Thyroid gland (tissue), 4 donors: ENCODE measurements at regions of chr16 and their contacts with region 1.

Region 1: DNA sequence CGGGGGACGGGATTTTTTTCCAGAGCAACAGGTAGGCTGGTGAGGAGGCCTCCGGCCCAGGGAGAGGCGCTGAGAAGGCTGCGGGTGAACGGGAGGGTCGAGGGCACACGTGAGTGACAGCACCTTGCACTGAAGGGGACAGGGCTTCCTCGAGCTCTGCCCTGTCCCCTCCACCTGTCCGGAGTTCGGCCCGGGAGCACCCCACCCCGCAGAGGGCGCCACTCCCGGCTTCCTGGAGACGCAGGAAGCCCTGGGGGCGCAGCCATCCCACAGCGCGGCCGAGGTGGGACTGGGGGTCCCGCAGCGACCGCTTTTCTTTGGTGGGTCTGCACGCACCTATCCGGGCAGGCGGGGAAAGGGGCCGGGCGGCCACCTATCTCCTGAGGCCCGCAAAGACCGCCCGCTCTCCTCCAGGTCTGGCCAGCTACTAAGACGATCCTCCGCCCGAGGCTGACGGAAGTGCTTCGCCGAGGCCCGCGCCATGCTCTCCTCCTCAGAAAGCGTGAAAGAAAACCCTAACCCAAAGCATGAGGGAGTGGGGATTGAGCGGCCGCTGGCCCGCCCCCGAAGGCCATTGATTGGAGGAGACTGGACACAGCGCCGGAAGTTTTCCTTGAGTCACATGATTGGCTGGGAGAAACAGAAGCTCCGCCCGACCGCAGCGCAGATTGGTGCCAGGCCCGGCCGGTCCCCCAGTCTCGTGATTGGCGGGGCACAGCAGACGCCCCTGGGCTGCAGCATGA is 34.3 kb downstream of the DDX19A start:
- DNase-seq: peak; percentile 98
- H3K4me3 ChIP-seq: peak overlapping the region; percentile 63 to 69 (median 63)
- H3K27ac ChIP-seq: peak overlapping the region; percentile 13 to 80 (median 75)
- H3K4me1 ChIP-seq: peaks cover 8 to 10% of the 10 kb centered on the region in 2 donors
- H3K27me3 ChIP-seq: no peaks in the 10 kb centered on the region
- CTCF ChIP-seq: peak in 4 of 6 experiments; percentile 15 to 26 (median 20)
- POLR2A ChIP-seq: peak in 1 of 2 donors; percentile 82

Region 2: DNA sequence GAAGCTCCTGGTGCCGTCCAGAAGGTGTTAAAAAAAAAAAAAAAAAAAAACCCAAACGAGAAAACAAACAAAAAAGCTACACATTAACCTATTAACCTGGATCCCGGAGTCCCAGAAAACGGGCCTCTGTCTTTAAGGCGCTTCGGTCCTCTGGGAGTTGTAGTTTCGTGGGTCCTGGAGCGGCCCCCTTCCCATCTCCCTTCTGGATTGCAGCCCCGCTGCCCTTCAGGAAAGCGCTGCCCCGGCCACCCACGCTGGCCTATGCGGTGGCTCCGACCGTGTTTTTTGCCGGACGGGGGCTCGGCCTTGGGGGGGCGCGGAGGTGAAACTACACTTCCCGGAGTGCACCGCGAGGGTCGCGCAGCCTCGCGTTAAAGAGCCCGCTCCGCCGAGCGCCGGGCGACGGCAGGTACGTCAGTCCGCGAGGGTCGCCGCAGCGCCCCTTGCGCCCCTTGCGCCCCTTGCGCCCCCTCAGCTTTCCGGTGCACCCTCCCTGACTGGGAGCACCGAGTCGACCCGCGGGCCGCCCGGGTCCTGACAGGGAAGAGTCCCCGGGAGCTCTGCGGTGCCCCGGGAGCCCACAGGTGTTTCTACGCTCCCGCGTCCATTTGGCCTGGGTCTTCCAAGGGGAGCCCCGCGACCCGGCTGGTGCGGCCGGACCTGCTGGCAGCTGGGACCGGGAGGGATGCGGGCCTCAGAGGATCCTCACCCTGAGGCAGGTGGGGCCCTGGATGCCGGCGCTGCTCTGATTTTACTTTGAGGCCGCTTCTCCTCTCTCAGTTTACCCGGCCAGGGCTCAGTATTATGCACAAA is 73.4 kb after region 1 on chr16 and contains the start of gene FCSK:
- intact Hi-C with region 1: loop called (anchors 5 kb)
- DNase-seq: peak; percentile 70
- H3K4me3 ChIP-seq: peak within 1 kb of the TSS; percentile 74 to 94 (median 81)
- H3K27ac ChIP-seq: peak within 1 kb of the TSS; percentile 67 to 100 (median 96)
- H3K4me1 ChIP-seq: peaks cover 0 to 8% of the 10 kb centered on the region in 2 donors
- H3K27me3 ChIP-seq: no peaks in the 10 kb centered on the region
- CTCF ChIP-seq: peak in 1 of 6 experiments; percentile 19
- POLR2A ChIP-seq: peak in 1 of 2 donors; percentile 59
- total RNA-seq, gene FCSK: 20.3 to 40.2 (median 24.5) TPM

Region 3: DNA sequence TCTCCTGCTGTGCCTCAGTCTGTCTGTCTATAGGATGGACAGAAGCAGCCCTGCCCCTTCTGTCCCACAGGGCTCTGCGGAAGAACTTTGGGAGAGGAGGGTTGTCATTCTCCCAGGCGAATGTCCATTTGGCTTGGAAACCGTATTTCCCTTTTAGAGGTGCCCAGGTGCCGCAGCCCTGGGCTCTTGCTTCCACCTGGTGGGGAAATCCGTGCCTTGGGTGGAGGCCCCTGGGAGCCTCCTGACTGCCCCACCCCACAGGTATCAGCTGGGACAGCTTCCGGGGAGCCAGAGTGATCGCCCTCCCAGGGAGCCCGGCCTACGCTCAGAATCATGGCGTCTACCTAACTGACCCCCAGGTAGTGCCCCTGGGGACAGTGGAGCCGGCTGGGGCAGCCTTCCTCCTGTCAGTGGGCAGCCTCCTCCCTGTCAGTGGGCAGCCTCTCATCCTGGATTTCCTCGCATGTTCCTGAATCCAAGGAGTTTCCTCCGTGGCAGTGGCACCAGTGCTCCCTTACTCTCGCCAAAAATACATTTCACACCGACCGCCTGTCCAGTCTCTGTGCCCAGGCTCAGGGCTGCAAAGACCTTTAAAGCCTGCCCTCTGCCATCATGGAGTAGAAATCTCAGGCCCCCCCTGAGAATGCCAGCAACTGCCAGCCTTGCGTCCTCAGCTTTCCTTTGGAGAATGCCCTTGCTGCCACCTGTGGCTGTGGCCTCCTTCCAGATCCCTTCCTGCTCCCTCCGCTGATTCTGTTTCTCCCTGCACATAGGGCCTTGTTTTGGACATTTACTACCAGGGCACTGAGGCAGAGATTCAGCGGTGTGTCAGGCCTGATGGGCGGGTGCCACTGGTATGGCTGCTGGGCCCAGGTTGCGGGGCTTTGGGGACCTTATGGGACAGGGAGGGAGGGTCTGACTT is 86.3 kb after region 1 on chr16:
- intact Hi-C with region 1: no loop called
- DNase-seq: no peak
- H3K4me3 ChIP-seq: no peak overlapping the region
- H3K27ac ChIP-seq: no peak overlapping the region
- H3K4me1 ChIP-seq: no peaks in the 10 kb centered on the region
- H3K27me3 ChIP-seq: no peaks in the 10 kb centered on the region
- CTCF ChIP-seq: no peak
- POLR2A ChIP-seq: no peak